CD8-positive, alpha-beta T cell (primary cell): ENCODE measurements at regions of chr6 and their contacts with region 1.

Region 1: GRCh38 chr6:159979136-159979874 is 10.4 kb downstream of the IGF2R start:
- DNase-seq: peak in 7 of 9 experiments; percentile 49 to 85 (median 62)
- ATAC-seq: peak; percentile 79
- H3K4me3 ChIP-seq: peak overlapping the region in 1 of 2 experiments; percentile 16
- H3K4me3 Mint-ChIP-seq: peak overlapping the region; percentile 70
- H3K27ac ChIP-seq: peak overlapping the region; percentile 29 to 87
- H3K27ac Mint-ChIP-seq: peak overlapping the region; percentile 85
- H3K4me1 ChIP-seq: peaks cover 83% of the 10 kb centered on the region
- H3K4me1 Mint-ChIP-seq: peaks cover 95% of the 10 kb centered on the region
- H3K27me3 ChIP-seq: no peaks in the 10 kb centered on the region
- H3K27me3 Mint-ChIP-seq: no peaks in the 10 kb centered on the region
- CTCF ChIP-seq: no peak

Region 2: DNA sequence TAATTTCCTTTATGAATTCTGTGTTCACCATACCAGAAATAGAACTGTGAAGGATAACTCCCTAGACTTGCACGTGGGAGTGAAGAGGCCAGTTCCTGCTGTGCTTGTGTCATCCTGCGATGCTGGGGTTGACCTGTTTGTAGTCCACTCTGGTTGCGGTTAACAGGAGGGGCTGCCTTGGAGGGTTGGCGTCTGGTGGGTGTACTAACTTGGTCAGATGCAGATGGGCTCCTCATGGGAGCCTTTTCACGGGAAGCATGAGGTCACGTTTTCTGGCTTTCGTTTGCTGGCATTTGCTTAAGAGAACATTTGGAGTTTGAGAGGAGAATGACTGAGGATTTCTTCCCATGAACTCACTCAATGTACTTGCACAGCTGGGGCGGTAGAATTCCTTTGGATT is 30.8 kb after region 1 on chr6:
- CTCF ChIA-PET with region 1: no interaction called
- POLR2A ChIA-PET with region 1: interaction called, 3 read pairs
- intact Hi-C with region 1: loop called in 1 of 2 experiments (anchors 5 kb)
- DNase-seq: no peak
- ATAC-seq: no peak
- H3K4me3 ChIP-seq: no peak overlapping the region
- H3K4me3 Mint-ChIP-seq: no peak overlapping the region
- H3K27ac ChIP-seq: no peak overlapping the region
- H3K27ac Mint-ChIP-seq: no peak overlapping the region
- H3K4me1 ChIP-seq: peaks cover 29% of the 10 kb centered on the region
- H3K4me1 Mint-ChIP-seq: peaks cover 47% of the 10 kb centered on the region
- H3K27me3 ChIP-seq: no peaks in the 10 kb centered on the region
- H3K27me3 Mint-ChIP-seq: no peaks in the 10 kb centered on the region
- CTCF ChIP-seq: no peak